Activated B cell treated with CpG ODN at 0.5 μM for 24 hours (primary cell): ENCODE measurements at regions of chr12 and their contacts with region 1.

Region 1: DNA sequence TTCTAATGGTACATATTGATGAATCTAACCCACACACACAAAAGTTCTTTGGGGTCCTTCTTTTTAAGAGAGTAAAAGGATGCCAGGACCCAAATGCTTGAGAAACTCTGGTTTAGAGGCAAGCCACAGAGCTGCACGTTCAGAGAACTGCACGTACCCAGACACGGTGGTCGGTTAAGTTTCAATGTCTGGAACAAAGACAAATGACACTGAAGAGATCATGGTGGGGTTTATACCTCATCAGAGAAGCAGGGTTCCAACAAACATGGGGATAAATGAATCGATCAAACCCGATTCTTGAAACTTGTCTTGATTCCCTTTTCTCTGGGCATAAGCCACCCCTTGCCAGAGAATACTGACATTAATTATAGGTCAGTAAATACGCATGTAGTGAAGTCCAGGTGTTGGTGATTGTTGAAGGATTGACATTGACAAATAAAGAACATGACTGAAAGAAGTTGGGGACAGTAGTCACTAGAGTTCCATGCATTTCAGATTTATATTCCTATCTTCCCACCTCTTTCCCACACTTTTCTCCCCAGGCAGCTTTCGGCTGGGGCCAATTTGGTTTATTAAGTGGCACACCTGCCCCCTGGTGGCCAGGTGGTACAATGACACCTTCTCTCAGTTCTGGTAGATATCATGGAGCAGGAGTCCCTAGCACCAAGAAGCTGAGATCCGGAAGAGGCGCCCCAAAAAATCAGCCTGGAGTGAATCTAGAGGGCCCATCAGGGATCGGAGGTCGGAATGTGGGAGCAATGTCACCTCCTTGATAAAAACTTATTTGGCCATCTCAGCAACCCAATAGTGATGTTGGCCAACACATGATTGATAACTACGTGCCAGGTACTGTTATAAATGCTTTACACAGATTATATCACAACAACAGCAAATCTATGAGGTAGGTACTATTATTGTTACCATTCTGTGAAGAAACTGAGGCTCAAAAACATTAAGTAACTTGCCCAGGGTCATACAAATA is 17.8 kb upstream of the HDAC7 start:
- DNase-seq: peak; percentile 53
- ATAC-seq: peak; percentile 52
- H3K4me3 Mint-ChIP-seq: peak overlapping the region; percentile 25
- H3K27ac Mint-ChIP-seq: peak overlapping the region; percentile 36
- H3K4me1 Mint-ChIP-seq: peaks cover 58% of the 10 kb centered on the region
- H3K27me3 Mint-ChIP-seq: no peaks in the 10 kb centered on the region
- CTCF ChIP-seq: no peak

Region 2: GRCh38 chr12:47651368-47652254 is 185.9 kb before region 1 on chr12:
- CTCF ChIA-PET with region 1: interaction called, 21 read pairs
- POLR2A ChIA-PET with region 1: no interaction called
- intact Hi-C with region 1: loop called (anchors 1 kb)
- DNase-seq: no peak
- ATAC-seq: peak; percentile 90
- H3K4me3 Mint-ChIP-seq: no peak overlapping the region
- H3K27ac Mint-ChIP-seq: peak overlapping the region; percentile 35
- H3K4me1 Mint-ChIP-seq: peaks cover 15% of the 10 kb centered on the region
- H3K27me3 Mint-ChIP-seq: no peaks in the 10 kb centered on the region
- CTCF ChIP-seq: no peak

Region 3: DNA sequence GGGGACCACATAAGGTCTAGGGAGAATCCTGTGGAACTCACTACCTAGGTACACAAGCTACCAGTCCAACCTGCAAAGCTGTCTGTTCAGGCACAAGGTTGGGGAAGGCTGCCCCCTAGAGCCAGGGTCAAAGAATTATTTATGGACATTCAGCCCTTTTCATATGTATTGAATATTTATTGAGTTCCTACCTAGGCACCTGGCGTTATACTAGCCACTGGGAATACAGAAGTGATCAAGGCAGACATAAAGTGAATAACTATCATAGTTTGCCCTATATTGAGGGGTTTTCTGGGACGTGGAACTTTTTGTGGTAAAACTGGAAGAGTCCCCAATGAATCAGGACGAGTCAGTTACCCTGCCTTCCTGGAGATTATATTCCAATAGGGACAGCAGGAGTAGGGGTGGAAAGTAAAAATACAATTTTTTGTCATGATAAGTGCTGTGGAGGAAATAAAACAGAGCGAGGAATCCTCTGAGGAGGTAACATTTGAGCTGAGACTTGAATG is 70.2 kb before region 1 on chr12:
- CTCF ChIA-PET with region 1: interaction called, 127 read pairs
- POLR2A ChIA-PET with region 1: interaction called, 6 read pairs
- intact Hi-C with region 1: loop called (anchors 1 kb)
- DNase-seq: peak; percentile 52
- ATAC-seq: peak; percentile 84
- H3K4me3 Mint-ChIP-seq: no peak overlapping the region
- H3K27ac Mint-ChIP-seq: no peak overlapping the region
- H3K4me1 Mint-ChIP-seq: peaks cover 9% of the 10 kb centered on the region
- H3K27me3 Mint-ChIP-seq: no peaks in the 10 kb centered on the region
- CTCF ChIP-seq: no peak

Region 4: DNA sequence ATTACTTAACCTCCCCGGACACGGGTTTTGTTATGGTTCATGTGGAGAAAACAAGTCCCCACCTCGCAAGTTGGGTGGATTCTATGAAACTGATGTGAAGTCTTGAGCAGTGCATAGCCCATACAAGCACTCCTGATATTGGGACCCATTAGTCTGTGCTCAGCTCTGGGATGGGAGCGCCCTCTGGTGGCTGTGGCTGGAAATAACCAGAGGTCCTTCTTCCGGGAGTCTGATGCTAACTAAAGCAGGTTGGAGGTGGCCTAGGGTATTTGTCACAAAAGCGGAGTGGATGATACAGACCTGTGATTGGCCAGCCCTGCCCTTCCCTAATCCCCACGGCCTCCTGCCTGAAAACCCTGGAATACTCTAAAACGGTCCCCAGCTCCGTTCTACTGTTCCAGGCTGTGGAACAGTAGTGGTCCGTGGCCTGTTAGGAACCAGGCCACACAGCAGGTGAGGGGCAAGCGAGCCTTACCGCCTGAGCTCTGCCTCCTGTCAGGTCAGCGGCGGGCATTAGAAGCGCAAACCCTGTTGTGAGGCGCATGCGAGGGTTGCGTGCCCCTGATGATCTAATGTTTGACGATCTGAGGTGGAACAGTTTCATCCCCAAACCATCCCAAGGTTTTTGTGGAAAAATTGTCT is 58.1 kb before region 1 on chr12:
- CTCF ChIA-PET with region 1: interaction called, 127 read pairs
- POLR2A ChIA-PET with region 1: interaction called, 8 read pairs
- intact Hi-C with region 1: loop called (anchors 1 kb)
- DNase-seq: peak; percentile 90
- ATAC-seq: peak; percentile 93
- H3K4me3 Mint-ChIP-seq: no peak overlapping the region
- H3K27ac Mint-ChIP-seq: peak overlapping the region; percentile 41
- H3K4me1 Mint-ChIP-seq: peaks cover 15% of the 10 kb centered on the region
- H3K27me3 Mint-ChIP-seq: no peaks in the 10 kb centered on the region
- CTCF ChIP-seq: no peak

Region 5: GRCh38 chr12:47797441-47797840 is 40.0 kb before region 1 on chr12:
- CTCF ChIA-PET with region 1: interaction called, 245 read pairs
- POLR2A ChIA-PET with region 1: interaction called, 21 read pairs
- intact Hi-C with region 1: loop called (anchors 1 kb)
- DNase-seq: peak; percentile 46
- ATAC-seq: peak; percentile 91
- H3K4me3 Mint-ChIP-seq: no peak overlapping the region
- H3K27ac Mint-ChIP-seq: peak overlapping the region; percentile 80
- H3K4me1 Mint-ChIP-seq: peaks cover 23% of the 10 kb centered on the region
- H3K27me3 Mint-ChIP-seq: no peaks in the 10 kb centered on the region
- CTCF ChIP-seq: no peak

Region 6: GRCh38 chr12:47819896-47820630 is 17.4 kb before region 1 on chr12 and contains the start of gene HDAC7:
- CTCF ChIA-PET with region 1: interaction called, 72 read pairs
- POLR2A ChIA-PET with region 1: interaction called, 573 read pairs
- intact Hi-C with region 1: loop called (anchors 1 kb)
- DNase-seq: peak; percentile 57
- ATAC-seq: peak; percentile 76
- H3K4me3 Mint-ChIP-seq: peak within 1 kb of the TSS; percentile 89
- H3K27ac Mint-ChIP-seq: peak within 1 kb of the TSS; percentile 93
- H3K4me1 Mint-ChIP-seq: peaks cover 65% of the 10 kb centered on the region
- H3K27me3 Mint-ChIP-seq: no peaks in the 10 kb centered on the region
- CTCF ChIP-seq: no peak
- total RNA-seq, gene HDAC7: 103 and 126 TPM in 2 replicates

Region 7: GRCh38 chr12:48131517-48131916 is 294.0 kb after region 1 on chr12:
- CTCF ChIA-PET with region 1: no interaction called
- POLR2A ChIA-PET with region 1: no interaction called
- intact Hi-C with region 1: no loop called
- DNase-seq: no peak
- ATAC-seq: no peak
- H3K4me3 Mint-ChIP-seq: no peak overlapping the region
- H3K27ac Mint-ChIP-seq: no peak overlapping the region
- H3K4me1 Mint-ChIP-seq: no peaks in the 10 kb centered on the region
- H3K27me3 Mint-ChIP-seq: no peaks in the 10 kb centered on the region
- CTCF ChIP-seq: no peak

Region 8: DNA sequence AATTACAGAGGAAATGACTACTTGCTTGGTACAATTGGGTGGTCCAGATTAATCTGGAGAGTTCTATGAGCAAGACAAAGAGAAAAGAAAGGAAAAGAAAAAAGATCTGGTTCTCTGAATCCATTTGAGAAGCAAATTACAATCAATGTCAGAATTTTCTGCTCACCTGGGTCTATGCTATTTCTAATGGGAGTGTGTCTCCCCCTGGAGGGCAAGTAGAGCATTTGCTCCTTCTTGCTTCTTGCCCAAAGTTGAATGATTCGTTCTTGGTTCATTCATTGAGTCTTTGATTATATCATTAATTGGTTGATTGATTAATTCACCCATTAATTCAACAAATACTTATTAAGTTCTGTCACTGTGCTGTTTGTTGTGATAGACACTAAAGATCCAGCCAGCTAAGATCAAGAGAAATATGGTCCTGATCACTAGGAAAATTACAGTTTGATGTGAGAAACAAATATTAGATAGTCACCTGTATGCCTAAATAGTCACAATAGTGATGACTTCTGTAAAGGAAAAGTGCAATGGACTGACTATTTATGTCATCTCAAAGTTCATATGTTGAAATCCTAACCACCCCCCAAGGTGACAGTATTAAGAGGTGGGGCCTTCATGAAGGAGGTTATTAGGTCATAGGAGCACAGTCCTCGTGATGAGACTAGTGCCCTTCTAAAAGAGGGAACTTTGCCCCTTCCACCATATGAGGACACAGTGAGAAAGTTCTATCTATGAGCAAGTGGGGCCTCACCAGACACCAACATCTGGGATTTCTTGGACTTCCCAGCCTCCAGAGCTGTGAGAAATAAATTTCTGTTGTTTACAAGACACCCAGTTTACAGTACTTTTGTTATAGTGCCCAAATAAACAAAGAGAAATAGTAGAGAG is 327.9 kb after region 1 on chr12:
- CTCF ChIA-PET with region 1: interaction called, 3 read pairs
- POLR2A ChIA-PET with region 1: no interaction called
- intact Hi-C with region 1: loop called (anchors 2 kb)
- DNase-seq: no peak
- ATAC-seq: peak; percentile 73
- H3K4me3 Mint-ChIP-seq: no peak overlapping the region
- H3K27ac Mint-ChIP-seq: no peak overlapping the region
- H3K4me1 Mint-ChIP-seq: no peaks in the 10 kb centered on the region
- H3K27me3 Mint-ChIP-seq: peaks cover 12% of the 10 kb centered on the region
- CTCF ChIP-seq: peak; percentile 69